B cell (primary cell): ENCODE measurements at regions of chr2 and their contacts with region 1.

Region 1: DNA sequence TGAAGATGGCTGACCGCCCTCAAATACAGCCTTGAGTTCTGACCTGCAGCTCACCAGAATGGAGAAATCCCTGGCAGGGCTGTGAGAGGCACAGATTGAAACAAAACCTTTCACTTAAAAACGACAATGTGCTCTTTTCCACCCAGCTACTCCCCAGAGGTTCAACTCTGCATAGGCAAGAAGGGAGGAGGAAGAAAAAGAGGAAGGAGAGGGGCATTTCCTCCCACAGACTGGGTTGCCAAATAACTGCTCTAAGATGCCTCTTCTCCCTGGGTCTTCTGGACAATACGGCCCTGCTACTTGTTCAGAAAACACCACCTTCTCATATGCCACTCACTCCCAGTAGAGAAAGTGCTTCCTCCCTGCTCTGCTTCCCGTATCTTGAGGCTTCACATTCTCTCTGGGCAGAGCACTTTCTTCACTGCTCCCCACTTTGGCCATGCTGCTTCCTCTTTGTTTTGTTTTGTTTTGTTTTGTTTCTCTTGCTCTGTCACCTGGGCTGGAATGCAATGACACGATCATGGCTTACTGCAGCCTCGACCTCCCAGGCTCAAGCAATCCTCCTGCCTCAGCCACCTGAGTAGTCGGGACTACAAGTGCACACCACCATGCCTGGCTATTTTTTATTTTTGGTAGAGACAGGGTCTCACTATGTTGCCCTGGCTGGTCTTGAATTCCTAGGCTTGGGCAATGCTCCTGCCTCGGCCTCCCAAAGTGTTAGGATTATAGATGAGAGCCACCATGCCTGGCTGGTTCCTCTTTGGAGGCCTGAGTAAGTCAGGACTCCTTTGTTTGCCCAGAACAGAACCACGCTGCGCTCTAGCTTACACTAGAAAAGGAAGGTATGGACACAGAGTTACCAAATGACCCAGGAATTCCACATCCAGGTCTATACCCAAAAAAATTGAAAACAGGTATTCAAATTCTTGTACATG is 136.2 kb upstream of the SLC1A4 start:
- DNase-seq: peak; percentile 73
- ATAC-seq: peak; percentile 79
- H3K4me3 ChIP-seq: peak overlapping the region in 2 of 5 experiments; percentile 17 to 34
- H3K4me3 Mint-ChIP-seq: peak overlapping the region; percentile 83
- H3K27ac ChIP-seq: peak overlapping the region; percentile 56 to 84
- H3K27ac Mint-ChIP-seq: peak overlapping the region; percentile 99
- H3K4me1 ChIP-seq: peaks cover 59 to 75% of the 10 kb centered on the region in 2 donors
- H3K4me1 Mint-ChIP-seq: peaks cover 61% of the 10 kb centered on the region
- H3K27me3 ChIP-seq: no peaks in the 10 kb centered on the region
- H3K27me3 Mint-ChIP-seq: no peaks in the 10 kb centered on the region
- CTCF ChIP-seq: no peak

Region 2: DNA sequence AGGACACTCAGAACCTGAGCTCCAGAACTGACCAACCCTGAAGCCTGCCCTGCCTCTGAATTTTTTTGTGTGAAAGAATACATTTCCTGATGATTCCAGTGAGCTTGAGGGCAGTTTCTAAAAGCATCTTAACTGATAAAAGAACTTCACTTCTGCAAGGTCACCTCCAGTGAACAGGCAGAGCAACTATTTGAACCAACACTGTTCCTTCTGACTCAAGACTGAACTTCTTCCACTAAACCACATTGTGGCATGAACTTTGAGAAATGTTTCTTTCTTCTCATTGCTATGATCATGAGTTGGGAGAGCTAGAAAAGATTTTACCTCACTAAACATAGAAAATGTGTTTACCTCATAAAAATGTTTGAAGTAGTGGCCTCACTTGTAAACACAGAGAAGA is 115.5 kb before region 1 on chr2:
- CTCF ChIA-PET with region 1: no interaction called
- POLR2A ChIA-PET with region 1: no interaction called
- intact Hi-C with region 1: no loop called
- DNase-seq: no peak
- ATAC-seq: no peak
- H3K4me3 ChIP-seq: no peak overlapping the region
- H3K4me3 Mint-ChIP-seq: no peak overlapping the region
- H3K27ac ChIP-seq: no peak overlapping the region
- H3K27ac Mint-ChIP-seq: no peak overlapping the region
- H3K4me1 ChIP-seq: no peaks in the 10 kb centered on the region
- H3K4me1 Mint-ChIP-seq: peaks cover 2% of the 10 kb centered on the region
- H3K27me3 ChIP-seq: no peaks in the 10 kb centered on the region
- H3K27me3 Mint-ChIP-seq: no peaks in the 10 kb centered on the region
- CTCF ChIP-seq: no peak

Region 3: GRCh38 chr2:64831134-64831976 is 21.7 kb before region 1 on chr2:
- CTCF ChIA-PET with region 1: interaction called, 67 read pairs
- POLR2A ChIA-PET with region 1: interaction called, 3 read pairs
- intact Hi-C with region 1: no loop called
- DNase-seq: peak; percentile 82
- ATAC-seq: peak; percentile 91
- H3K4me3 ChIP-seq: peak overlapping the region in 3 of 5 experiments; percentile 11 to 38 (median 16)
- H3K4me3 Mint-ChIP-seq: peak overlapping the region; percentile 63
- H3K27ac ChIP-seq: no peak overlapping the region
- H3K27ac Mint-ChIP-seq: peak overlapping the region; percentile 77
- H3K4me1 ChIP-seq: peaks cover 8 to 12% of the 10 kb centered on the region in 2 donors
- H3K4me1 Mint-ChIP-seq: peaks cover 13% of the 10 kb centered on the region
- H3K27me3 ChIP-seq: no peaks in the 10 kb centered on the region
- H3K27me3 Mint-ChIP-seq: no peaks in the 10 kb centered on the region
- CTCF ChIP-seq: peak; percentile 96

Region 4: GRCh38 chr2:64839844-64840243 is 13.2 kb before region 1 on chr2:
- CTCF ChIA-PET with region 1: interaction called, 12 read pairs
- POLR2A ChIA-PET with region 1: interaction called, 24 read pairs
- intact Hi-C with region 1: no loop called
- DNase-seq: peak; percentile 89
- ATAC-seq: peak; percentile 89
- H3K4me3 ChIP-seq: peak overlapping the region in 1 of 5 experiments; percentile 0
- H3K4me3 Mint-ChIP-seq: peak overlapping the region; percentile 74
- H3K27ac ChIP-seq: peak overlapping the region; percentile 79 to 83
- H3K27ac Mint-ChIP-seq: peak overlapping the region; percentile 97
- H3K4me1 ChIP-seq: peaks cover 40 to 59% of the 10 kb centered on the region in 2 donors
- H3K4me1 Mint-ChIP-seq: peaks cover 45% of the 10 kb centered on the region
- H3K27me3 ChIP-seq: no peaks in the 10 kb centered on the region
- H3K27me3 Mint-ChIP-seq: no peaks in the 10 kb centered on the region
- CTCF ChIP-seq: no peak

Region 5: GRCh38 chr2:64865073-64865830 is 12.2 kb after region 1 on chr2:
- CTCF ChIA-PET with region 1: interaction called, 20 read pairs
- POLR2A ChIA-PET with region 1: interaction called, 8 read pairs
- intact Hi-C with region 1: loop called (anchors 1 kb)
- DNase-seq: peak; percentile 86
- ATAC-seq: peak; percentile 54
- H3K4me3 ChIP-seq: peak overlapping the region; percentile 46 to 88 (median 64)
- H3K4me3 Mint-ChIP-seq: no peak overlapping the region
- H3K27ac ChIP-seq: peak overlapping the region; percentile 91 to 93
- H3K27ac Mint-ChIP-seq: peak overlapping the region; percentile 53
- H3K4me1 ChIP-seq: peaks cover 49 to 60% of the 10 kb centered on the region in 2 donors
- H3K4me1 Mint-ChIP-seq: peaks cover 1% of the 10 kb centered on the region
- H3K27me3 ChIP-seq: no peaks in the 10 kb centered on the region
- H3K27me3 Mint-ChIP-seq: no peaks in the 10 kb centered on the region
- CTCF ChIP-seq: peak; percentile 85

Region 6: GRCh38 chr2:64876137-64876647 is 23.2 kb after region 1 on chr2:
- CTCF ChIA-PET with region 1: no interaction called
- POLR2A ChIA-PET with region 1: no interaction called
- intact Hi-C with region 1: no loop called
- DNase-seq: no peak
- ATAC-seq: no peak
- H3K4me3 ChIP-seq: no peak overlapping the region
- H3K4me3 Mint-ChIP-seq: no peak overlapping the region
- H3K27ac ChIP-seq: no peak overlapping the region
- H3K27ac Mint-ChIP-seq: no peak overlapping the region
- H3K4me1 ChIP-seq: peaks cover 7 to 9% of the 10 kb centered on the region in 2 donors
- H3K4me1 Mint-ChIP-seq: peaks cover 12% of the 10 kb centered on the region
- H3K27me3 ChIP-seq: no peaks in the 10 kb centered on the region
- H3K27me3 Mint-ChIP-seq: no peaks in the 10 kb centered on the region
- CTCF ChIP-seq: no peak

Region 7: DNA sequence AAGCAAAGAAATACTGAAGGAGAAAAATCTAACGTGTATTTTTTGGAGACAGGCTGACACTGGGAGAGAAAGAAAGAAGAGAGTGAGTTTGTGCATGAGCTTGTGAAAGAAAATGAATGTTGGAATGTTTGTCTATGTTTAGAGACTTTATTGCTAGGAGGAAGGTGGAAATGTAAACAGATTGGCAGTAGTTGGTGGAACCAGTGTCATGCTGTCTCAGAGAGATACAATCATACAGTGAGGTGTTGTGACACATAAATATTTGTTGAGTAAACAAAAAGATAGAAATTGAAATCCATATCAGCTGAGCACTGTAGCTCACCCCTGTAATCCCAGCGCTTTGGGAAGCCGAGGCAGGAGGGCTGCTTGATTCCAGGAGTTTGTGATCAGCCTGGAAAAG is 1359.7 kb after region 1 on chr2:
- CTCF ChIA-PET with region 1: no interaction called
- POLR2A ChIA-PET with region 1: no interaction called
- intact Hi-C with region 1: no loop called
- DNase-seq: no peak
- ATAC-seq: no peak
- H3K4me3 ChIP-seq: no peak overlapping the region
- H3K4me3 Mint-ChIP-seq: no peak overlapping the region
- H3K27ac ChIP-seq: no peak overlapping the region
- H3K27ac Mint-ChIP-seq: no peak overlapping the region
- H3K4me1 ChIP-seq: no peaks in the 10 kb centered on the region
- H3K4me1 Mint-ChIP-seq: no peaks in the 10 kb centered on the region
- H3K27me3 ChIP-seq: no peaks in the 10 kb centered on the region
- H3K27me3 Mint-ChIP-seq: no peaks in the 10 kb centered on the region
- CTCF ChIP-seq: no peak